ENCODE measurements at regions of chr11 and their contacts with region 1.

Region 1: DNA sequence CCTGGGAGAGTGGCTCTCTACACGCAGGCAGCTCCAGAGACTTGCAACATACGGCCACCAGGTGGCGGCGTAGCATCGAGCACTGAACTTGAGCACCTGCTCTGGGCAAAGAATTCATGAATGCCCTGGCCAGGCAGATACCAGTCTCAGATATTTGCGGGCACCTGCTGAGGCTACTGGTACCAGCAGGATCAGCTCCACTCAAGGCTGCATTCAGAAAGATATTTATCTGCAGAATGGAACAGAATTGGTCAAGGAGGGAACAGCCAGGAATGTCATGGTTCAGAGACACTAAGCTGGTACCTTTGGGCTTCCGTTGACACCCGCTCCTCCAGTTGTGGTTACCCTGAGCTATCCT is 10.8 kb upstream of the CCDC86 start:
- DNase-seq: peak; percentile 84
- H3K4me3 ChIP-seq: no peak overlapping the region
- H3K27ac ChIP-seq: no peak overlapping the region
- H3K4me1 ChIP-seq: peaks cover 8% of the 10 kb centered on the region
- CTCF ChIP-seq: peak; percentile 99

Region 2: GRCh38 chr11:60775420-60775961 is 55.6 kb before region 1 on chr11:
- CTCF ChIA-PET with region 1: no interaction called
- POLR2A ChIA-PET with region 1: no interaction called
- intact Hi-C with region 1: loop called (anchors 2 kb)
- DNase-seq: peak; percentile 91
- H3K4me3 ChIP-seq: no peak overlapping the region
- H3K27ac ChIP-seq: no peak overlapping the region
- H3K4me1 ChIP-seq: no peaks in the 10 kb centered on the region
- CTCF ChIP-seq: peak; percentile 93

Region 3: DNA sequence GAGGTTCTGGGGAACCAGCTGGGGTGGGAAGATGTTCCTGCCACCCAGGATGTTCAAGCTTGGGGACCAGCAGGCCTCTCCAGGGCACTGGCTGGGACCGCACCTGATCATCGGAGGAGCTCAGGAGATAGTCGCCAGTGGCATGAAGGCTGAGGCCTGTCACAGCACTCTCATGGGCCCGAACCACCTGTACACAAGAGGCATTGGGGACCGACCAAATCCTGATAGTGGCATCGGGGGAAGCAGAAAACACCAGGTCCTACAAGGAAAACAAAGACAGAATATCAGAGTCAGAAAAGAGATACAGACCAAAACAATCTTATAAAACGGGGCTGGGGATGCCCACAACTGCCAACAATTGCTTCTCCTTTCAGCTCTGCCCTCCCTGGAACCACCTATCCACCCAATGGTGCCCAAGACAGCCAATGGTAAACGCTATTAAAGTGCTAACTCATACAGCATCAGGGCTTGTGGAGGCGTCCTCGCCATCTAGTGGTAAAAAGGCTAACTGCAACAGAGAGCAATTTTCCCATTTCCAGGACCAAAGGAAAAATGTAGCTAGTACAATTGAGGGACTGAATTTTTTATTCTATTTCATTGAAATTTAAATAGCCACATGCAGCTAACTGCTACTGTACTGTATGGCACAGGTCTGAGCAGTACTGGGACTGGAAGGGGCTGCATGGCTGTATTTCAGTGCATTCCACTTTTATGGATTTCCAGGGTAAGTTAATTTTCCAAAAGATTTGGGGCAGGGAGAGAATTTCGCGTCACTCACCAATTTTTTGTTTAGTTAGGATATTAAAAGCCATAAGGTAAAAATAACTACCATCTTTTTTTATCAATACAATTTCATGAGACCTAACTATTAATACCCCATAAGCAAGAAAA is 68.2 kb after region 1 on chr11:
- CTCF ChIA-PET with region 1: interaction called, 3 read pairs
- POLR2A ChIA-PET with region 1: interaction called, 4 read pairs
- intact Hi-C with region 1: loop called (anchors 1 kb)
- DNase-seq: peak; percentile 51
- H3K4me3 ChIP-seq: no peak overlapping the region
- H3K27ac ChIP-seq: no peak overlapping the region
- H3K4me1 ChIP-seq: peaks cover 2% of the 10 kb centered on the region
- CTCF ChIP-seq: peak; percentile 99

Region 4: DNA sequence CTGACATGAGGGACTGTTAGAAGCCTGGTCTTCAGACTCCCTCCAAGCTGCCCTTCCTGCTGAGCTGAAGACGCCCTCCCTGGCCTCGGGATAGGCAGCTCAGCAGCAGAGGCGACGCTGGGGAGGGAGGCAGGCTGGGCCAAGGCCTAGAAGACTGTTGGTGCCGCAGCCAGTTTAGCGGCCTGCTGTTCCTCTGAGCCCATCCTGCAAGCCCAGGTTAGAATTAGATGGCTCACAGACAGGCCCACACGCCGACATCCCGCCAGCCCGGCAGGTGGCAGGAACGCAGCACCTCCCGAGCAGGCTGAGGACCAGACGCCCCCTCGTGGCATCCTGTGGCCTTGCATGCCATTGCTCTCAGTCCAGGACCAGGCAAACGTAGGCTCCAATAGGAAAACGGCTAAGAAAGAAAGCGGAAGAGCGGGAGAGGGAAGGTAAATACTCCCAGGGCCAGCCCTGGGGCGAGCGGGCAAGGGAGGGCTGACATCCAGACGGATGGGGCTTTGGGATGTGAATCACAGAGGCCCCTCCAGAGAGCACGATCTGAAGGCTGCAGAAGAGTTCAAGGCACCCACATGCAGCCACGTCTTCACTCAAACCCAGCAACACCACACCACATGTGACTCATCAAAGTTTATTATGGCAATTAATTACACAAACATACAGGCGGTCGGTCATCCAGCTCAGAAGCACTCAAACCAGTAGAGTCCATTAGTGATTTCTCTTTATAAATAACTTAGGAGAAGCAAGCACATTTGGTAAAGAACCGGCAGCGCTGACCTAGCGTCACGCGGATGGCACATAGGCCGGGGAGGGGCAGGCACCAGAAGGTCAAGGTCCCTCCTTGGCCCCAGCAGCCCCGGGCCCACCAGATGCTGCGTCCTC is 298.8 kb after region 1 on chr11:
- CTCF ChIA-PET with region 1: no interaction called
- POLR2A ChIA-PET with region 1: no interaction called
- intact Hi-C with region 1: loop called (anchors 1 kb)
- DNase-seq: peak; percentile 89
- H3K4me3 ChIP-seq: no peak overlapping the region
- H3K27ac ChIP-seq: no peak overlapping the region
- H3K4me1 ChIP-seq: peaks cover 8% of the 10 kb centered on the region
- CTCF ChIP-seq: peak; percentile 100

Region 5: DNA sequence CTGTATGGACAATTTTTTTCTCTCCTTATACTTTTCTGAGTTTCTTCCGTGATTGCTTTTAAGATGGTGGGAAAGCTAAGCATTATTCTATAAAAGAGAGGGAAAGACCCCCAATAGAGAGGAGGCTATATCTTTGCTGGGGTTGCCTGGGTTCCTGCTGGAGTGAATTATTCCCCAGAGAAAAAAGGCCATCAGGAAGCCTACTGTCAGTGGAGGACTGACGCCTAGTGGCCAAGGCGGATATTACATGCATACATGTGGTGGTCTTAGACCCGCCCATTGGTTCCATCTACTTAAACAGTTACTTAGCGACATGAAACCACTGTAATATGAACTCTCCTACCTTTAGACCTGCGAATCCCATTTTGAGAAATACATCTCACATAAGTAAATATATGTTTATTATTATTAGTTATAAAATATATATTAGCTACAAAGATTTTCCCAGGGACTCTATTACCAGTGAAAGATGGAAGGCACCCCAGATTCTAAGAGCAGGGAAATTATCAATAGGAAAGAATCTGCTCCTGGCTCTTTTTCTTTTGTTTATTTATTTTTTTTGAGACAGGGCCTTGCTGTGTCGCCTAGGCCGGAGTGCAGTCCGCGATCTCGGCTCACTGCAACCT is 356.5 kb after region 1 on chr11:
- CTCF ChIA-PET with region 1: no interaction called
- POLR2A ChIA-PET with region 1: no interaction called
- intact Hi-C with region 1: loop called (anchors 2 kb)
- DNase-seq: peak; percentile 85
- H3K4me3 ChIP-seq: no peak overlapping the region
- H3K27ac ChIP-seq: no peak overlapping the region
- H3K4me1 ChIP-seq: no peaks in the 10 kb centered on the region
- CTCF ChIP-seq: peak; percentile 95

Region 6: DNA sequence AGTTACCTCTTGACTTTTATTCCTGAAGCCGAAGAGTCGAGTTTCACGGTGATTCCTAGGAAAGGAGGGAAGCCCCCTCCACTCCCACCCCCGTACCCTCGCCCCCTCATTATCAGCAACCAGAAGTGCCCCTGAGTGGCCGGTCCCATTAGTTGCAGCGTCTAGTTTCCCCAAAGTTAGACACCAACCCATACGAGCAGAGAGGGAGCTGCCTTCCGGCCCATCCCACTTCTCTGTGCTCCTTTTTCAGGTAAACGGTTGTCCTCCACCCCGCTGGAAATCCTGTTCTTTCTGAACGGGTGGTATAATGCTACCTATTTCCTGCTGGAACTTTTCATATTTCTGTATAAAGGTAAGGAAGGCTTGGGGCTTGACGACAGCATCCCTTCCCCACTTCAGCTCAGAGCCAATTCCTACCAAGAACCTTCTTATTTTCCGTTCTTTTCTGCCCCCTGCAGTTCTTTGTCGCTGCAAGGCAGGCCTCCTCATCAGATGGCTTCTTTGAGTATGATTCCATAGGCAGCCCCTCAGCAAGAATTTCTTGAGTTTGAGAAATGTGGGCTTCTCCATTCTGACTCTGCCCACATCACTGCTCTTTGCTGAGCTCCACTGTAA is 562.0 kb after region 1 on chr11:
- CTCF ChIA-PET with region 1: no interaction called
- POLR2A ChIA-PET with region 1: no interaction called
- intact Hi-C with region 1: no loop called
- DNase-seq: peak; percentile 32
- H3K4me3 ChIP-seq: peak overlapping the region; percentile 9
- H3K27ac ChIP-seq: no peak overlapping the region
- H3K4me1 ChIP-seq: no peaks in the 10 kb centered on the region
- CTCF ChIP-seq: peak; percentile 64

Measured in OCI-LY7 (cell line).